ENCODE measurements at regions of chr13 and their contacts with region 1.

Region 1: DNA sequence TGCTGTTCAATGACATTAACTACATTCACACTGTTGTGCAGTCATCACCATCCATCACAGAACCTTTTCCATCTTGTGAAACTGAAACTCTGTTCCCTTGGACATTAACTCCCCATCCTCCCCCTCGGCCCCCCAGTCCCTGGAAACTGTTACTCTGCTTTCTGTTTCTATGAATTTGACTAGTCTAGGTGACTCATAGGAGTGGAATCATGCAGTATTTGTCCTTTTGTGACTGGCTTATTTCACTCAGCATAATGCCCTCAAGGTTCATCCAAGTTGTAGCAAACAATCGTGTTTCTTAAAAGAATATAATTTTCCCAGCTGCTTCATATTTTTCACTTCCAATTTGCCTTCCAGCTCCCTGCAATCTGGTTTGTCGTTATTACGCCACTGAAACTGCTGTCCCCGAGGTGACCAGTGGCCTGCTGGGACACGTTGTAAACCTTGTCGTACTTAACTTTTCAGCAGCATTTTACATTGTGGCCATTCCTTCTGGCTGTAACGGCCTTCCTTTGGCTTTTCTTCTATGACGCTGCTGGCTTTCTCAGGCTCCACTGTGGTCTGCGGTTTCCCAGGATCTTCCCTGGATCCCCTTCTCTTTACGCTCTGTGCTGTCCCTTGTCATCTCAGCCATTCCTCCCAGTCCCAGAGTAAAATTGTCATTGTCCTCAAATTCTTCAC is 74.0 kb downstream of the DHRS12 start:
- DNase-seq: peak; percentile 75
- H3K4me3 Mint-ChIP-seq: no peak overlapping the region
- H3K27ac Mint-ChIP-seq: no peak overlapping the region
- H3K4me1 Mint-ChIP-seq: peaks cover 23% of the 10 kb centered on the region
- H3K27me3 Mint-ChIP-seq: no peaks in the 10 kb centered on the region
- CTCF ChIP-seq: no peak

Region 2: GRCh38 chr13:51435002-51435578 is 294.9 kb before region 1 on chr13:
- CTCF ChIA-PET with region 1: interaction called, 4 read pairs
- POLR2A ChIA-PET with region 1: interaction called, 4 read pairs
- intact Hi-C with region 1: loop called (anchors 5 kb)
- DNase-seq: peak; percentile 17
- H3K4me3 Mint-ChIP-seq: no peak overlapping the region
- H3K27ac Mint-ChIP-seq: no peak overlapping the region
- H3K4me1 Mint-ChIP-seq: no peaks in the 10 kb centered on the region
- H3K27me3 Mint-ChIP-seq: no peaks in the 10 kb centered on the region
- CTCF ChIP-seq: peak; percentile 43

Region 3: GRCh38 chr13:51714663-51715168 is 15.3 kb before region 1 on chr13:
- CTCF ChIA-PET with region 1: interaction called, 6 read pairs
- POLR2A ChIA-PET with region 1: interaction called, 12 read pairs
- intact Hi-C with region 1: no loop called
- DNase-seq: peak; percentile 62
- H3K4me3 Mint-ChIP-seq: no peak overlapping the region
- H3K27ac Mint-ChIP-seq: peak overlapping the region; percentile 78
- H3K4me1 Mint-ChIP-seq: peaks cover 11% of the 10 kb centered on the region
- H3K27me3 Mint-ChIP-seq: no peaks in the 10 kb centered on the region
- CTCF ChIP-seq: no peak